ENCODE measurements at regions of chr2 and their contacts with region 1.

Region 1: DNA sequence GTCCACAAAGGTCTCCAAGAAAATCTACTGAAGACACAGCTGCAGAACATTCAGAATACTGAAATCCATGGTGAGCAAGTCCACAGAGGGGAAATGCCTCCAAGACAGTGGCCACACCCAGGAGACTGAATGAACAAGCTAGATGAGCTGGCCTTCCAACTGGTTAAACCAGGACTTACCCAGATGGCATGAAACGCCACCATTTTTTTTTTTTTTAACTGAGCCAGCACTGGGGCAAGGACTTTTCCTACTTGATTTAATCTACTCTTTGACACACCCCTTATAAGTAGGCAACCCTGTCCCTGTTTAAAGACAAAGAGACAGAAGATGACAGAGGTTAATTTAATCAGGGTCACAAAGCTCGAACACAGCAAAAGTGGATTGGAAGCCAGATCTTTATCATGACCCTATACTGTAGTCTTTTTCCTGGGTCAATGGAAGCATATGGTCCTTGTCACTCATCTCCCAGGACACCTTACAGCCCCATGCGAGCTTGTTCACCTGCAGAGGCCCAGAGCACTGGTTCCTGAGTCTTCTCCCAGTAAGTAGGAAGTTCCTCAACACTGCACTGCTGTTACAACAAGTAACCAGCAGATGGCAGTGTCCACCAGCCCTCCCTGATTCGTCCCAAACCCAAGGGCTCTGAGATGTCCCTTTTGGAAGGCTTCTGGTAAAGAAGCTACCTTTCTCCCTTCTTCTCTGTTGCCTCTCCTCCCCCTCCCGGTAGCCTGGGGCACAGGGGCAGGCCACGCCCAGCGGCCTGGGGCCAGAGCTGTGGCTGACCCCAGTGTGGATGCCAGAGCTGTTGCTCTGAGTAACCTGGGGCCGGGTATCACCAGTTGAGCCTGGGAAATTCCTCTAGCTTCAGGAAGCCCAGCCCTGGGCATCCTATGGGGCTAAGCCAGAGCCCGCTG is 5.6 kb upstream of the GDF7 start:
- DNase-seq: peak in 1 of 2 donors; percentile 67
- ATAC-seq: peak; percentile 87
- H3K4me3 ChIP-seq: no peak overlapping the region
- H3K27ac ChIP-seq: no peak overlapping the region
- H3K4me1 ChIP-seq: no peaks in the 10 kb centered on the region
- H3K27me3 ChIP-seq: no peaks in the 10 kb centered on the region

Region 2: DNA sequence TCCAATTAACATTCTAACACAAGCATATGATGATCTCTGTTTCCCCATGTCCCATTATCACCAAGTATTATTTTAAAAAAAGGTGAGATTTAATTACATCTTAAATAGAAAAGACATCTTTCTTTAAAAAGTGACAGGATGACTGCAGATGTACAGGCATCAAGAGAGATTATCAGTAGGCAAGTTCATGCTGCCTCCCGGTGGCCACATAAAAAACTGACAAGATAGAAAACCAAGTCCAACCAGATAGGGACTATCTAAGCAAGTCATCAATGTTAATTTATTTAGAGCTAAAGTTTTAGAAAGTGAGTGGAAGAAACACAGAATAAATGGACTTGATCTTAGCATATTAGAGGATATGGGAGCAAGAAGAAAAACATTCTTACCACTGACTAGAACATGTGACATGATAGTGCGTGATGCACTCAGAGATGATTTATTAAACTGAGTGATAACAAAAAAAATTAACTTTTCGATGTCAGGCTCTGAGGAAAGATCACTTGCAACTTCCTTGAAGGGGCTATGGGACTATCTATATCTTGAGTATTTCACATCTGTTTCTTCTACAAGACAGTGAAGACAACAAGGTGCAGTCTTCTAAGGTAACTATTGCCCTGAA is 457.1 kb after region 1 on chr2:
- intact Hi-C with region 1: loop called (anchors 2 to 5 kb)
- DNase-seq: no peak
- ATAC-seq: no peak
- H3K4me3 ChIP-seq: no peak overlapping the region
- H3K27ac ChIP-seq: no peak overlapping the region
- H3K4me1 ChIP-seq: no peaks in the 10 kb centered on the region
- H3K27me3 ChIP-seq: no peaks in the 10 kb centered on the region

Region 3: DNA sequence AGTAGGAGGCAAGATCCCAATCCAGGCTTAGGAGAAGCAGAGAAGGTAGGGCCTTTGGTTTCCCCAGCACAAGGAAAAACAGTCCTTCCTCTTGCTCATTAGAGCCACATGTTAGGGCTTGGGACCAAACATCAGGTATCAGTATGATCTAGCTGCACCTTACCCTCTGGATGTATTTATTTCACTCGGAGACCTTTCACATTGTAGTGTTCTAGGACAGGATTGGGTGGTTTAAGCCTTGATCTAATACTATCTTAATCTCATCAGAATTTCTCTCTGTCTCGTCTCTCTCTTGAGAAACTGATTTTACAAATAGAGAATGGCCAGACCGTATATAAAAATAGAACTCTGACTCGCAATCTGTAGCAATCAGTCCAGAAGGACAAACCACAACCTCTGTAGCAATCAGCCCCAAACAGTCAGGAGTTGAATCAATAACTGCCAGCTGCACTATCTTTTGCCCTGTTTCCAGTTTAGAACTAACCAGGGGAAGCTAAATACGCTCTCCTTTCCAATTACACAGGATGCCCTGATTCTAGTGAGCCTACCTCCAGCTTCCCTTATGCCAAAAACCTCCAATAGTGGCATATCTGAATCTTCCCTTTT is 669.6 kb after region 1 on chr2:
- intact Hi-C with region 1: no loop called
- DNase-seq: no peak
- ATAC-seq: no peak
- H3K4me3 ChIP-seq: no peak overlapping the region
- H3K27ac ChIP-seq: no peak overlapping the region
- H3K4me1 ChIP-seq: no peaks in the 10 kb centered on the region
- H3K27me3 ChIP-seq: no peaks in the 10 kb centered on the region

Measured in aorta (tissue), 5 donors.